Activated CD4-positive, alpha-beta T cell treated with anti-CD3 and anti-CD28 coated beads for 36 hours (primary cell): ENCODE measurements at regions of chr12 and their contacts with region 1.

Region 1: GRCh38 chr12:6278439-6279255 is 31.8 kb upstream of the PLEKHG6 start:
- DNase-seq: peak; percentile 91
- ATAC-seq: peak; percentile 94
- H3K4me3 Mint-ChIP-seq: peak overlapping the region; percentile 69
- H3K27ac Mint-ChIP-seq: peak overlapping the region; percentile 78
- H3K4me1 Mint-ChIP-seq: peaks cover 5% of the 10 kb centered on the region
- H3K27me3 Mint-ChIP-seq: peaks cover 9% of the 10 kb centered on the region

Region 2: DNA sequence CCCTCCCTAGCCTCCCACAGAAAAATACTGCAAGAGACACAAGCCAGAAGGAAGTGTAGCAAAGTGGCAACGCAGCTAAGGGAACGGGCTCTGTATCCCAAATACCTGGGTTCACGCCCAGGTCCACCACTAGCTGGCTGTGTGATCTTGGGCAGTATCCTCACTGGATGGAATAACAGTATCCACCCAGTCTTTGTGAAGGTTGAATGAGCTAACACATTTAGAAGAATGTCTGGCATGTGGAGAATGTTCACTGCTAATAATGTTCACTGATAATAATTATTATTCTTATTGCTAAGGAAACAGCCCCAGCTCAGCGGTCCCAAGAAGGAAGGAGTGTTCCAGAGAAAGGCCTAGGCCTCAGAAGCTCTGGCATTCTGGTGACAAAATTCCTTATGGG is 225.1 kb before region 1 on chr12:
- CTCF ChIA-PET with region 1: interaction called, 13 read pairs
- POLR2A ChIA-PET with region 1: no interaction called
- intact Hi-C with region 1: no loop called
- DNase-seq: no peak
- ATAC-seq: no peak
- H3K4me3 Mint-ChIP-seq: no peak overlapping the region
- H3K27ac Mint-ChIP-seq: no peak overlapping the region
- H3K4me1 Mint-ChIP-seq: no peaks in the 10 kb centered on the region
- H3K27me3 Mint-ChIP-seq: peaks cover 9% of the 10 kb centered on the region

Region 3: DNA sequence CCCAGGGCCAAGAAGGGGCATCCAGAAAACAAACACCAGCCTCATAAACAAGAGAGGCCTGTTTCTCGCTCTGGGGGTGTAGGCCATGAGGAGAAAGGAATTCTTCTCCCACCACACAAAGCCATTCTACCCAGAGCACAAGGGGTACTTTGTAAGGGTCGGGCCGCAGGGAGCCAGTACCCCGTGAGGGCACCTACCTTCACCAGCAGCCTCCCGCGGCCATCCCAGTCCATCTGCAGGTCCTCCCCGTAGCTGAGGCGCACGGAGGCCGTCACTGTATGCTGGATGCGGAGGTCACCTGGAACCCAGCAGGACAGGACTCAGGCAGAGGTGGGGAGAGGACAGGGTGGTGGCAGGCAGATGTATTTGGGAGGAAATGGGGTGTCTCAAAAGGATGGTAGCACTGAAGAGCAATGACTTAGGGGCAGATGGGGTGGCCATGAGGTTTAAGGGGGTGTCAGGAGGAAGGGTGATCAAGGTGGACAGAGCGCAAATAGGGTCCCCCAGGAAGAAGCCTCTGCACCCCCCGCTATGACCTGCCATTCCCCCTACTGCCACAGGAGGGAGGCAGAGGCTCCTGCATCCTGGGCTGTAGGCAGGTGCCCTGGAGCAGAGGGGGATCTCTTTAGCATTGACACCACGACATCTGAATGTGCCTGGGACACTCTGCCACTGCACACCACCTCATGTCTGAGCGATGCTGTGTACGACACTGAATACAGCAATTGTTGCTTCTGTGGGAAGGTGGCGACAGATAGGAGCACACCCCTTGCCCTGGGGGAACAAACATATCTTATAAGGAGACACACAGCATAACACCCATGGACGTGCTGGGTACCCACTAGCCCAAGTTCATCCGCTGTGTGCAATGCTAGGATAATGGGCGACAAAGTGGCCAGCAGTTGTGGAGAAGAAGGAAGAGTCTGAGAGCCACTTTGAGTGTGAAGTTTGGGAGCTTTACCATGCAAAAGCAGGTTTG is 215.6 kb before region 1 on chr12:
- CTCF ChIA-PET with region 1: interaction called, 13 read pairs
- POLR2A ChIA-PET with region 1: no interaction called
- intact Hi-C with region 1: loop called in 1 of 2 experiments (anchors 1 kb)
- DNase-seq: peak; percentile 75
- ATAC-seq: peak; percentile 90
- H3K4me3 Mint-ChIP-seq: no peak overlapping the region
- H3K27ac Mint-ChIP-seq: no peak overlapping the region
- H3K4me1 Mint-ChIP-seq: no peaks in the 10 kb centered on the region
- H3K27me3 Mint-ChIP-seq: peaks cover 4% of the 10 kb centered on the region

Region 4: GRCh38 chr12:6230321-6231110 is 48.1 kb before region 1 on chr12:
- CTCF ChIA-PET with region 1: interaction called, 4 read pairs
- POLR2A ChIA-PET with region 1: no interaction called
- intact Hi-C with region 1: loop called in 1 of 2 experiments (anchors 1 kb)
- DNase-seq: peak; percentile 87
- ATAC-seq: peak; percentile 87
- H3K4me3 Mint-ChIP-seq: peak overlapping the region; percentile 49
- H3K27ac Mint-ChIP-seq: peak overlapping the region; percentile 84
- H3K4me1 Mint-ChIP-seq: peaks cover 33% of the 10 kb centered on the region
- H3K27me3 Mint-ChIP-seq: no peaks in the 10 kb centered on the region

Region 5: GRCh38 chr12:6267139-6267721 is 11.4 kb before region 1 on chr12:
- CTCF ChIA-PET with region 1: interaction called, 18 read pairs
- POLR2A ChIA-PET with region 1: no interaction called
- intact Hi-C with region 1: loop called in 1 of 2 experiments (anchors 1 kb)
- DNase-seq: peak; percentile 84
- ATAC-seq: peak; percentile 87
- H3K4me3 Mint-ChIP-seq: no peak overlapping the region
- H3K27ac Mint-ChIP-seq: peak overlapping the region; percentile 55
- H3K4me1 Mint-ChIP-seq: peaks cover 16% of the 10 kb centered on the region
- H3K27me3 Mint-ChIP-seq: peaks cover 2% of the 10 kb centered on the region

Region 6: GRCh38 chr12:6312529-6313325 is 34.1 kb after region 1 on chr12:
- CTCF ChIA-PET with region 1: no interaction called
- POLR2A ChIA-PET with region 1: no interaction called
- intact Hi-C with region 1: no loop called
- DNase-seq: peak; percentile 31
- ATAC-seq: peak; percentile 65
- H3K4me3 Mint-ChIP-seq: no peak overlapping the region
- H3K27ac Mint-ChIP-seq: no peak overlapping the region
- H3K4me1 Mint-ChIP-seq: peaks cover 7% of the 10 kb centered on the region
- H3K27me3 Mint-ChIP-seq: peaks cover 9% of the 10 kb centered on the region